ENCODE measurements at regions of chr17 and their contacts with region 1.

Region 1: GRCh38 chr17:21043286-21044232 is 748 bp upstream of the USP22 start:
- H3K4me3 Mint-ChIP-seq: peak overlapping the region; percentile 72
- H3K27ac Mint-ChIP-seq: peak overlapping the region; percentile 97
- H3K4me1 Mint-ChIP-seq: peaks cover 31% of the 10 kb centered on the region
- H3K27me3 Mint-ChIP-seq: no peaks in the 10 kb centered on the region

Region 2: DNA sequence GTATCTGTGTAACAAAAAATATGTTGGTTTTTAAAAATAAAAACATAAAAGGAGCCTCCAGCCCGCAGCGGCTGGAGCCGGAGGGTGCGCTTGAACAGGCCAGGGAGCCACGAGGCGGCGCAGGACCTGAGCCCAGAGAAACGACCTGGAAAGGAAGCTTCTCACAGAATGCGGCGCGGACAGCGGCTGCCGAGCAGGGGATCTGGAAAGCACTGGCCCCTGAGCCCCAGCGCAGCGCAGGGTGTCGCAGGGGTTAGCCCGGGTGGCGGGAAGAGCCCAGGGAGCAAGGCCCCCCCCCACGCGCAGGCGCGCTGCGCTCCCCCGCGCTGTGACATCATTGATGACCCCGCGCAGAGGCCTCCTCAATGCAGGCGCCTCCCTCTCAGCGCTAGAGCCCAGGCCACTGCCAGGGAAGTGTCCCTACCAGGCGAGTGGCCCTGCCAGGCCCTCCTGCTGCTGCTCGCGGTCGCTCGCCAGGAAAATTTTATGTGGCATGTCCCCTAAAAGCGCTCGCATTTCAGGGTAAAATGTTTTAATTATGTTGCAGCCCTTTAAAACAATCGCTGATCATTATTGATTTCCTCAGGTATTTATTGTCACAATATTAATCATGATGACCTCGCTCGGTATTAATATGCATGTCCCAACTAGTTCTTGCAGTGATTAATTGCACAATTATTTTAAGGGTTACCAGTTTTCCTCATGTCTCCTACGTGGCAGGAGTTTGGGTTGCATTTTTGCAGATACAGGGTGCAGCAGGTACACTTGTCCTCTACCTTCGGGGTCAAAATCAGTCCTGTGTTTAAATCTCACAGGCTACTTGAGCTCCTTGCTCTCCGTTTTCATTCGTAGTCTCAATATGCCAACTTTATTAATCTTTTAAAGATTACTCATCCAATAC is 134.9 kb before region 1 on chr17:
- intact Hi-C with region 1: loop called (anchors 2 kb)
- H3K4me3 Mint-ChIP-seq: peak overlapping the region; percentile 87
- H3K27ac Mint-ChIP-seq: peak overlapping the region; percentile 92
- H3K4me1 Mint-ChIP-seq: peaks cover 6% of the 10 kb centered on the region
- H3K27me3 Mint-ChIP-seq: peaks cover 13% of the 10 kb centered on the region

Region 3: GRCh38 chr17:21113716-21114115 is 70.2 kb after region 1 on chr17:
- intact Hi-C with region 1: loop called (anchors 5 kb)
- H3K4me3 Mint-ChIP-seq: no peak overlapping the region
- H3K27ac Mint-ChIP-seq: peak overlapping the region; percentile 58
- H3K4me1 Mint-ChIP-seq: peaks cover 33% of the 10 kb centered on the region
- H3K27me3 Mint-ChIP-seq: peaks cover 2% of the 10 kb centered on the region

Region 4: DNA sequence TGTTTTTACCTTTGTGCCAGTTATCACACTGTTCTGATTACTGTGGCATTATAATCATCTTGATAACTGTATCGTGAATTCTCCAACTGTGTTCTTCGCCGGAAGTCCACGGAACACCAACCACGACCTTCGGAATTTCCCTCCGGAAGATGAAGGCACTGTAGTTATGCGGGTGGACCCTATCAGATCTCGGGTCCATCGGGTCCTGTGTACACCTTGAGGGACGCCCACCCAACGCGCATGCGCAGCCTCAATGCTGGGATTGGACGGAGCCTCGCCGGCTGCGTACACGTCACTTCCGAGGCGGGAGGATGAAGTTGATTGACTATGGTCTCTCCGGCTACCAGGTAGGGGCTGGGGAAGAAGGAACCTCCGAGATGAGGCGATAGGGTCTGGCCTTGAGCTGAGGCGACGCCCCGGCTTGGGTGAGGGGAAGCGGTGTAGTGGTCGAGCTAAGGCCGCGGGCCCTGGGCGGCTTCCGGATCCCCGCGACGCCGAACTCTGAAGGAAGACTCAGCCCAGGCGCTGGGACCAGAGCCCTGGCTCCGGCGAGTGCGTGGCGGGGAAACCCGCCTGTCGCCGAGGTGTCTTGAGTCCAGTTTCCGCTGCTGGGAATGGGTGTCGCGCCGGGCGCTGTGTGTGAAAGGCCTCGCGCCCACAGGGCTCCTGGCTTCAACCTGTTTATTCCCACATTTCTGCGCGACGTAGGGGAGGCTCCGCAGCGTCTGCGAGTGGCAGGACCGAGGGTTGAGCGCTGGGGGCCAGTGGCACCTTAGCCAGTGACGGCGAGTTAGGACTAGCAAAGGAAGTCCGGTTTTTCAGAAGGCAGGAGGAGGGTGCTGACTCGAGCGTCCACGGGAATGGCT is 83.3 kb after region 1 on chr17 and contains the start of gene DHRS7B:
- intact Hi-C with region 1: loop called (anchors 5 kb)
- H3K4me3 Mint-ChIP-seq: peak within 1 kb of the TSS; percentile 85
- H3K27ac Mint-ChIP-seq: peak within 1 kb of the TSS; percentile 98
- H3K4me1 Mint-ChIP-seq: peaks cover 48% of the 10 kb centered on the region
- H3K27me3 Mint-ChIP-seq: no peaks in the 10 kb centered on the region

Region 5: GRCh38 chr17:21214015-21214776 is 170.6 kb after region 1 on chr17 and contains the start of gene TMEM11:
- intact Hi-C with region 1: loop called (anchors 5 kb)
- H3K4me3 Mint-ChIP-seq: peak within 1 kb of the TSS; percentile 87
- H3K27ac Mint-ChIP-seq: peak within 1 kb of the TSS; percentile 93
- H3K4me1 Mint-ChIP-seq: peaks cover 67% of the 10 kb centered on the region
- H3K27me3 Mint-ChIP-seq: no peaks in the 10 kb centered on the region

Region 6: GRCh38 chr17:21275579-21276263 is 232.2 kb after region 1 on chr17:
- intact Hi-C with region 1: loop called (anchors 5 kb)
- H3K4me3 Mint-ChIP-seq: peak overlapping the region; percentile 84
- H3K27ac Mint-ChIP-seq: peak overlapping the region; percentile 58
- H3K4me1 Mint-ChIP-seq: peaks cover 40% of the 10 kb centered on the region
- H3K27me3 Mint-ChIP-seq: peaks cover 19% of the 10 kb centered on the region

Measured in dendritic cell treated with granulocyte-macrophage colony-stimulating factor and Interleukin-4, amounts not matched to agents 40 ng/mL and 50 ng/mL, for 4 days (primary cell).